Right ventricle myocardium superior (tissue), 1 donor: ENCODE measurements at regions of chr1 and their contacts with region 1.

Region 1: DNA sequence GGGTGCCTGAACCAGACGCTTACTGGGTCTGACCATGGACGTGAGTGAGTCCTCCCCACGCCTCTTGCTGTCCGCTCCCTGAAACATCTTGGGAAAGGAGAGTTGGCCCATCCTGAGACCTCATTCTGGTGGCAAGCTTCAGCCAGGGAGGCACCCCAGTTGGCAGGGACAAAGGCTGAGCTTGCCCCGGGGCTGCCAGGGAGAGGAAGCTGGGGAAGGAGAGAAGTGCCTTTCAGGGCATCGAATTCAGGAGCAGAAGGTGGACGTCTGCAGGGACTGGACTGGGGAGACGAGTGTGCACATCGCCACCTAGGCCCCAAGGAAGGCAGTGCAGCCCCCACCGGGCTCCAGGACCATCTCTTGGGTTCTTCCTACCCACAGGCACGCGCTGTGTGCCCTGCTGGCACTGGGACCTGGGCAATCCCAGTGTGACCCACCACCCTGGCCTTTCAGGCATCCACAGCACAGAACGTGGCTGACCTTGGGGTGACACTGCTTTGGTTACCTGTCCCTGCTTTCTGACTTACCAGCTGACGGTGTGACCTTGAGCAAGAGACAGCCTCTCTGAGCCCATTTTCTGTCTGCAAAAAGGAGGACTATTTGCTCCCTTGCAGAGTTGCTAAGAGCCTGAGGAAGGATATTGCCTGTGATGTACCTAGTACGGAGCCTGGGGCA is 133.0 kb upstream of the WNT4 start:
- DNase-seq: peak; percentile 54
- ATAC-seq: peak; percentile 62

Region 2: GRCh38 chr1:21869620-21870121 is 406.2 kb before region 1 on chr1:
- intact Hi-C with region 1: no loop called
- DNase-seq: peak; percentile 84
- ATAC-seq: peak; percentile 75

Region 3: GRCh38 chr1:22121411-22121911 is 154.4 kb before region 1 on chr1:
- intact Hi-C with region 1: loop called (anchors 10 kb)
- DNase-seq: no peak
- ATAC-seq: no peak

Region 4: GRCh38 chr1:22341791-22342605 is 66.1 kb after region 1 on chr1:
- intact Hi-C with region 1: no loop called
- DNase-seq: no peak
- ATAC-seq: no peak